Activated T-helper 1 cell treated with anti-CD3 and anti-CD28 coated beads, Interleukin-12 subunit alpha, Interleukin-12 subunit beta, Interleukin-2, Interleukin-4 antibody, amounts not matched to agents 30 ng/mL and 10 ng/mL and 1 ng/mL, durations not matched to agents 14 hours and 24 hours and 36 hours (primary cell): ENCODE measurements at regions of chr11 and their contacts with region 1.

Region 1: GRCh38 chr11:61575886-61576861 is 4.7 kb downstream of the SYT7 start:
- DNase-seq: no peak
- H3K4me3 Mint-ChIP-seq: no peak overlapping the region
- H3K27ac Mint-ChIP-seq: no peak overlapping the region
- H3K4me1 Mint-ChIP-seq: no peaks in the 10 kb centered on the region
- H3K27me3 Mint-ChIP-seq: peaks cover 20% of the 10 kb centered on the region

Region 2: GRCh38 chr11:61613051-61613450 is 36.9 kb after region 1 on chr11:
- intact Hi-C with region 1: loop called (anchors 1 kb)
- DNase-seq: no peak
- H3K4me3 Mint-ChIP-seq: no peak overlapping the region
- H3K27ac Mint-ChIP-seq: no peak overlapping the region
- H3K4me1 Mint-ChIP-seq: no peaks in the 10 kb centered on the region
- H3K27me3 Mint-ChIP-seq: peaks cover 13% of the 10 kb centered on the region

Region 3: GRCh38 chr11:61827571-61828378 is 251.6 kb after region 1 on chr11 and contains the start of gene FADS2:
- intact Hi-C with region 1: no loop called
- DNase-seq: peak; percentile 91
- H3K4me3 Mint-ChIP-seq: peak within 1 kb of the TSS; percentile 93
- H3K27ac Mint-ChIP-seq: peak within 1 kb of the TSS; percentile 96
- H3K4me1 Mint-ChIP-seq: peaks cover 50% of the 10 kb centered on the region
- H3K27me3 Mint-ChIP-seq: no peaks in the 10 kb centered on the region
- total RNA-seq, gene FADS2: 250 and 256 TPM in 2 replicates